IMR-90 (cell line): ENCODE measurements at regions of chr22 and their contacts with region 1.

Region 1: GRCh38 chr22:32457031-32457430 is 7.2 kb downstream of the BPIFC start:
- DNase-seq: no peak
- ATAC-seq: no peak
- H3K4me3 ChIP-seq: no peak overlapping the region
- H3K27ac ChIP-seq: no peak overlapping the region
- H3K4me1 ChIP-seq: no peaks in the 10 kb centered on the region
- H3K27me3 ChIP-seq: peaks cover 3% of the 10 kb centered on the region
- CTCF ChIP-seq: no peak
- POLR2A ChIP-seq: no peak
- RAD21 ChIP-seq: no peak

Region 2: DNA sequence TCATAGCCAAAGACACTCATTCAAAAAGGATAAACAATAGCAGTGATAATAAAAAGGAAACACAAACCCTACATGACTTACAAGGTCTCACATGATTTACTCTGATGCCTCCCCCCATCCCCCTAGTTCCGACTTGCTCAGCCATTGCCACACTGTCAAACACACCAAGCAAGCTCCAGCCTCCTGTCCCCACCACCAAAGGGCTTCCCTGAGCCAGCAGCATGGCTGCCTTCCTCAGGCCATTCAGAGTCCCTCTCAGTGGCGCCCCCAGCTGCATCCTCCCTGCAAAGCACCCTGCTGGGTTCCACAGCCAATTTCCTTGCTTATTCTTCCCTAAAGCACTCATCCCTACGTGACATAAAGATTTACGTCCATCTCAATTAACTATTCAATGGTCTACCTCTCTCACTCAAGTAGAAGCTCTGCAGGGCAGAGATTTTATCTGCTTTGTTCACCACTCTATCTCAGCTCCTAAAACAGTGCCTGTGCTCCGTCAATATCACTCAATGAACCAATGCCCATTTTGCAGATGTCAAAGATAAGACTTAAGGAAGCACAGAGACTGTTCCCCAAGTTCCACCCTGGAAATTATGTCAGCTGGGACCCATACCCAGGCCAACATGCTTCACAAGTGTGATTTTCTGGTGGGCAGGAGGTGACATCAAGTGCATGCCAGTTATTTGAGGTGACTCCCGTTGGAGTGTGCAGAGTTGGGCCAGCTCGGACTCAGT is 494.2 kb after region 1 on chr22:
- CTCF ChIA-PET with region 1: interaction called, 10 read pairs
- POLR2A ChIA-PET with region 1: no interaction called
- dilution Hi-C with region 1: no loop called
- in situ Hi-C with region 1: no loop called
- intact Hi-C with region 1: no loop called
- DNase-seq: no peak
- ATAC-seq: no peak
- H3K4me3 ChIP-seq: no peak overlapping the region
- H3K27ac ChIP-seq: no peak overlapping the region
- H3K4me1 ChIP-seq: no peaks in the 10 kb centered on the region
- H3K27me3 ChIP-seq: peaks cover 4% of the 10 kb centered on the region
- CTCF ChIP-seq: no peak
- POLR2A ChIP-seq: no peak
- RAD21 ChIP-seq: no peak